H1 (cell line): ENCODE measurements at regions of chr6 and their contacts with region 1.

Region 1: GRCh38 chr6:31158140-31158862 is at the start of gene TCF19:
- DNase-seq: peak; percentile 97 to 99
- H3K4me3 ChIP-seq: peak within 1 kb of the TSS; percentile 62 to 76 (median 68)
- H3K27ac ChIP-seq: no peak within 1 kb of the TSS; the same call in 1 of the 2 replicates
- H3K4me1 ChIP-seq: peaks cover 0 to 24% (median 18%) of the 10 kb centered on the region in 4 experiments; a peak in 6 of 7 replicates
- H3K27me3 ChIP-seq: no peaks in the 10 kb centered on the region
- CTCF ChIP-seq: no peak
- EP300 ChIP-seq: no peak
- POLR2A ChIP-seq: no peak
- RAD21 ChIP-seq: no peak
- total RNA-seq, gene TCF19: 10.0 and 11.0 TPM in 2 replicates

Region 2: DNA sequence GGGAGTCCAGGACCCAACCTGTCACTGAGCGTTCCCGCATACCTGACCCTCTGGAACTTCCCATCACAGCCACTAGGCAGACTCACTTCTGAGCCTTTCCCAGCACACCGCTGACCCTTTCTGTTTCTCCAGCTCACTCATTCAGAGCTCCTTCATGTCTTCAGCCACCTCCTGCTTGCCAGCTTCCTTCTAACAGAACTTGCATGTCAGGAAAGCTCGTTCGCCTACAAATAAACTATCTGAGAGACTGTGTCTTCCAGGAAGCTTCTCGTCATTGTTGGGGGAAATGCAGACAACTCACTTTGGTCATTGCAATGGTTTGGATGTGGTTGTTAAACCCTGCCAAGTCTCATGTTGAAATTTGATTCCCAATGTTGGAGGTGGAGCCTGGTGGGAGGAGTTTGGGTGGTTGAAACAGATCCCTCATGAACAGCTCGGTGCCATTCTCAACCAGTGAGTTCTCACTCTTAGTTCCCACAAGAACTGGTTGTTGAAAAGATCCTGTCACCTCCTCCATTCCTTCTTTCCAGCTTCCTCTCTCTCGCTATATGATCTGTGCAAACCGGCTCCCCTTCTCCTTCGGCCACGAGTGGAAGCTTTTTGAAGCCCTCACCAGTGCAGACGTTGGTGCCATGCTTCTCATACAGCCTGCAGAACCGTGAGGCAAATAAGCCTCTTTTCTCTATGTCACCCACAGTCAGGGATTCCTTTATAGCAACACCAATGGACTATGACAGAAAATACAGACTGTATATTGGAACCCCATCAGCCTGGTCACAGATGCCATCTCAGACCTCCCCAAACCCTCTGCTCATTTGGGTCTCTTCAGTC is 176.1 kb before region 1 on chr6:
- CTCF ChIA-PET with region 1: no interaction called
- POLR2A ChIA-PET with region 1: no interaction called
- DNase-seq: peak in 1 of 2 experiments; percentile 68
- H3K4me3 ChIP-seq: peak overlapping the region in 3 of 4 experiments; percentile 3 to 47 (median 6); a peak in 4 of 8 replicates
- H3K27ac ChIP-seq: no peak overlapping the region
- H3K4me1 ChIP-seq: peaks cover 0 to 2% (median 0%) of the 10 kb centered on the region in 4 experiments; a peak in 1 of 7 replicates
- H3K27me3 ChIP-seq: no peaks in the 10 kb centered on the region
- CTCF ChIP-seq: peak; percentile 39 to 80 (median 65); a peak in 3 of 4 replicates
- EP300 ChIP-seq: no peak
- POLR2A ChIP-seq: no peak
- RAD21 ChIP-seq: peak; percentile 38 to 53; a peak in 3 of 4 replicates

Region 3: DNA sequence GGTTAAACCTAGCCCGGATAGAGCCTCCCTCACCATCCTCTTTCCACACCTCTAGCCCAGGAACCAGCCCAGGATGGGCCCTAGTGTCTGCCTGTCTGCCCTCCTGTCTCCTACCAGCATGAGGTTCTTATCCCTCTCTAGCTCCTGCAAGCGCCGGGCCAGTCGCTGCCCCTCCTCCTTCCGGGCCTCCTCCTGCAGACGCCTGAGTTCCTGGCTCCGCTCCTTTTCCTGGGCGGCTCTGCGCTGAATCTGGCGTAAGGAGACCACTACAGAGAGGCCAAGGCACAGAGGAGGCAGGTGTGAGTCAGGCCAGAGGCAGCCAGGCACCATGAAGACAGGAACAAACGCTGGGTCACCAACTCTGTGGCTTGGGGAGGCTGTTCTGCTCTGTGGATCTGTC is 15.2 kb before region 1 on chr6:
- CTCF ChIA-PET with region 1: interaction called, 41 read pairs
- POLR2A ChIA-PET with region 1: interaction called, 2,251 read pairs
- DNase-seq: no peak
- H3K4me3 ChIP-seq: no peak overlapping the region
- H3K27ac ChIP-seq: no peak overlapping the region
- H3K4me1 ChIP-seq: peaks cover 0 to 16% (median 11%) of the 10 kb centered on the region in 4 experiments; a peak in 6 of 7 replicates
- H3K27me3 ChIP-seq: 0 out of 7 replicates have a peak, but pooled peaks cover 0 to 2% (median 0%) of the 10 kb centered on the region in 4 experiments
- CTCF ChIP-seq: no peak
- EP300 ChIP-seq: no peak
- POLR2A ChIP-seq: no peak
- RAD21 ChIP-seq: no peak

Region 4: DNA sequence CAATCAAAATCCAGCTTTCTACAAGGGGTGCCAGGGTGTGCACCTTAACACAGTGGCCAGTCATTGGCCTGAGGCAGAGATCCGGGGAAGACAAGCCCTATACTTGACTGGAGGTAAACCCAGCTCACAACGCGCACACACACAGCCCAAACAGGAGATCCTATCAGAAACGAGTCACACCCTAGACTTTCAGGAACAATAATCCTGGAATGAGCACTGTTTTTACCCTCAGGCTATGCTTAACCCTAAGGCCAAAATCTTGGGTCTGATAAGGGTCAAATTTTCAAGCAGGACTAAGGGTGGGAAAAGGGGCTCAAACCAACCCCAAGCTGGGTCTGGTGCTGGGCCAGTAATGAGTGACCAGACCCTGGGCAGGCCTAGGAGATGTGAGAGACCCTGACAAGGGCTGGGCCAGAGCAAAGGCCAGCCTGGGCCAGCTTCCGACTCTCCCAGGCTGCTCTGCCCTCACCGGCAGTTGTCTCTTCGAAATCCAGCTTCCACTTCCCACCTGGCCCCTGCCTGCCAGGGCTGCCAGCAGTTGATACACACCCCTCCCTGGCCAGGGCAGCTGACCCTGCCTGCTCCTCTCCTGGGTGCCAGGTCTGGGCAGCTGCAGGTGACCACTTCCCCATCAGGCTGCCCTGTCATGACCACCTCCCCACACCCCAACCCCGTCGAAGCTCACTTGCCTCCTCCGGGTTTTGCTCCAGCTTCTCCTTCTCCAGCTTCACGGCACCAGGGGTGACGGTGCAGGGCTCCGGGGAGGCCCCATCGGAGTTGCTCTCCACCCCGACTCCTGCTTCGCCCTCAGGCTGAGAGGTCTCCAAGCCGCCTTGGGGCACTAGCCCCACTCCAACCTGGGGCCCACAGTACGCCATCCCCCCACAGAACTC is 11.5 kb after region 1 on chr6:
- CTCF ChIA-PET with region 1: interaction called, 21 read pairs
- POLR2A ChIA-PET with region 1: interaction called, 2,251 read pairs
- DNase-seq: peak in 1 of 2 experiments; percentile 63
- H3K4me3 ChIP-seq: peak overlapping the region; percentile 70 to 92 (median 80)
- H3K27ac ChIP-seq: peak overlapping the region; percentile 77
- H3K4me1 ChIP-seq: peaks cover 22 to 38% (median 28%) of the 10 kb centered on the region in 4 experiments
- H3K27me3 ChIP-seq: no peaks in the 10 kb centered on the region
- CTCF ChIP-seq: no peak
- EP300 ChIP-seq: no peak
- POLR2A ChIP-seq: peak in 1 of 2 experiments; percentile 14; a peak in 2 of 3 replicates
- RAD21 ChIP-seq: no peak